Activated CD8-positive, alpha-beta memory T cell treated with anti-CD3 and anti-CD28 coated beads, Interleukin-2, amount 10 ng/mL, durations not matched to agents 7 days and 5 days (primary cell): ENCODE measurements at regions of chr16 and their contacts with region 1.

Region 1: GRCh38 chr16:88737298-88738150 is 31.2 kb downstream of the CTU2 start:
- DNase-seq: peak; percentile 86
- ATAC-seq: peak; percentile 91
- H3K4me3 Mint-ChIP-seq: no peak overlapping the region
- H3K27ac Mint-ChIP-seq: no peak overlapping the region
- H3K4me1 Mint-ChIP-seq: no peaks in the 10 kb centered on the region
- H3K27me3 Mint-ChIP-seq: no peaks in the 10 kb centered on the region

Region 2: DNA sequence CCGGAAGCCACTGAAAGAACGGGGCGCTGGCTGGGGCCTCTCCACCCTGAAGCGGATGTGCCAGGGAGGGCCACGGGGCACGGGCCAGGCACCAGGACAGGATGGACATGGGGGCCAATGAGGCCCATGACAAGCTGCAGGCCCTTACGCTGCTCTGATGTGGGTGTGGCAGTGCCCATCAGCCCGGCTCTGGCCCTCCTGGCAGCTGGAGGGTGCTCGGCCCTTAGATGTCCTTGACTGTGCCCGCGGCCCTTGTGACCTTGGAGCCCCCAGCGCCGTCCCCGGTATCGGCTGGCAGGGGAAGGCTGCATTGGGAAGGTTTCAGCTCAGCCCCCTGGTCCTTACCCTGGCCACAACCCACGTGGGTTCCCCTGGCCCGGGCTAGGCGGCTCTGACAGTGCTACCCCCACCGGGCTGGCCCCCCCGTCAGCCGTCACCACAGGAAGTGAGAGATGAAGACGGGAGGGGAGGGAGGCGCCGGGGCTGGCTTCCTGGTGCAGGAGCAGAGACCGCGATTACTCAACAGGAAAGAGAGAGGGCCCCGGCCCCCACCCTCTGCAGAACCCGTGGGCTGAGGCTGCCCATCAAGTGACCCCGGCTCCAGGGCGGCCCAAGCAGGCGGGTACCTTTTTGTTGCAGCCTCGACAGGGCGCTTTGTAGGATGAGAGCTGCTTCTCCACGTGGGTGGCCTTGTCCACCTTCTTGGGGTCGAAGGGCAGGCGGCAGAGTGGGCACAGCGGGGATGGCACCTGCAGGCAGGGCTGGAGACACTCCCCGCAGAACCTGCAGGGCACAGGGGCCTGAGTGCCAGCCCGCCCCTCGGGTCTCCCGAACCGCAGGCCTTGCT is 36.7 kb before region 1 on chr16:
- CTCF ChIA-PET with region 1: interaction called, 17 read pairs
- DNase-seq: peak; percentile 99
- ATAC-seq: peak; percentile 75
- H3K4me3 Mint-ChIP-seq: peak overlapping the region; percentile 89
- H3K27ac Mint-ChIP-seq: peak overlapping the region; percentile 98
- H3K4me1 Mint-ChIP-seq: peaks cover 61% of the 10 kb centered on the region
- H3K27me3 Mint-ChIP-seq: no peaks in the 10 kb centered on the region

Region 3: DNA sequence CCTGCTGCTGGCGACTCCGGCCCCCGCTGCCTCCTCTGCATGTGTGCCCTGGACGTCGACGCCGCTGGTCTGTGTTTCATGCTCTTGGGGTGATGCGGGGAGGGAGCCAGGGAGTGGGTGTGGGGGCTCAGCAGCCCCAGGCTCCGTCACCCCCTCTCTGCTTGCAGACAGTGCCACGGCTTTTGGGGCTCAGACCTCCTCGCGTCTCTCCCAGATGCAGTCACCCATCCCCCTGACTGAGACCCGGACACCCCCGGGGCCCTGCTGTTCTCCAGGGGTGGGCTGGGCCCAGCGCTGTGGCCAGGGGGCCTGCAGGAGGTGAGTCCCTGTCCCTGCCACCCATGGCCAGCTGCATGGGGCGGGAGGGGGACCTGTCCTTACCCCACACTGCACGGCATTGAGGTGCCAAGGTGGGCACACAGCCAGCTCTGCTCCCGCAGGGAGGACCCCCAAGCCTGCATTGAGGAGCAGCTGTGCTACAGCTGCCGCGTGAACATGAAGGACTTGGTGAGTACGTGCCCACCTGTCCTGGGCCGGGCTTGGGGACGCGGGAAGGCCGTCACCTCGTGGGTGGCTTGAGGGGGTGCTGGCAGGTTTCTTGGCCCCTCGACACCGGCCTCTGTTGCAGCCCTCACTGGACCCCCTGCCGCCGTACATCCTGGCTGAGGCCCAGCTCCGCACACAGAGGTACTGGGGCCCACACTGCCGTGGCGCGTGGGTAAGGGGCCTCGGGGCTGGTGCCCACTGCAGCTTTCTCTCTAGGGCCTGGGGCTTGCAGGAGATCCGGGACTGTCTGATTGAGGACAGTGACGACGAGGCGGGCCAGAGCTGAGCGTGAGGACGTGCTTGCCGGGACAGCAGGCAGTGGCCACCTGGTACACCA is 22.9 kb before region 1 on chr16:
- CTCF ChIA-PET with region 1: interaction called, 20 read pairs
- DNase-seq: no peak
- ATAC-seq: no peak
- H3K4me3 Mint-ChIP-seq: no peak overlapping the region
- H3K27ac Mint-ChIP-seq: no peak overlapping the region
- H3K4me1 Mint-ChIP-seq: peaks cover 2% of the 10 kb centered on the region
- H3K27me3 Mint-ChIP-seq: no peaks in the 10 kb centered on the region

Region 4: DNA sequence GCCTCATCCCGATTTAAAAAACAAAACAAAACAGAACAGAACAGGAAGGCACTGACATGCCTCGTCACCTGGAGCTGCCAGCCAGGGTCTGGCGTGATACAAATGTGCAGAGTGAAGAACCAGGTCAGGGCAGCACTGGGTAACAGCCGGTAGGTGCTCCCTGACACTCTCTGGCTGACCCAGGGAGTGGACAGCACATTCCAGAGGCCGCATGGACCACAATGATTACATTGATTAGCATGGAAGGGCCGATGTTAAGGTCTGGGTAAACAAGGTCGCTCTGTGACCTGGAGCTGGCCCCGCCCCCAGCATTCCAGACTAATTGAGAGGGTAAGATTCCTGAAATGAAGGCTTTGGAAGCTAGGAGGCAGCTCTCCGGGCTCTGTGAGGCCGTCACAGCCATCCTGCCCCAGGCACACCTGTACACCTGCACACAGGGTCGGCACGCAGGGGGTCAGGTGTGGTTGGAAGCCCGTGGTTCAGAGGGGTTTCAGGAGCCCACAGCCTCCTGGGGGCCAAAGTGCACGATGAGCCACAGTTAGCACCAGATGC is 26.1 kb after region 1 on chr16:
- CTCF ChIA-PET with region 1: interaction called, 40 read pairs
- DNase-seq: no peak
- ATAC-seq: no peak
- H3K4me3 Mint-ChIP-seq: no peak overlapping the region
- H3K27ac Mint-ChIP-seq: no peak overlapping the region
- H3K4me1 Mint-ChIP-seq: peaks cover 39% of the 10 kb centered on the region
- H3K27me3 Mint-ChIP-seq: no peaks in the 10 kb centered on the region

Region 5: DNA sequence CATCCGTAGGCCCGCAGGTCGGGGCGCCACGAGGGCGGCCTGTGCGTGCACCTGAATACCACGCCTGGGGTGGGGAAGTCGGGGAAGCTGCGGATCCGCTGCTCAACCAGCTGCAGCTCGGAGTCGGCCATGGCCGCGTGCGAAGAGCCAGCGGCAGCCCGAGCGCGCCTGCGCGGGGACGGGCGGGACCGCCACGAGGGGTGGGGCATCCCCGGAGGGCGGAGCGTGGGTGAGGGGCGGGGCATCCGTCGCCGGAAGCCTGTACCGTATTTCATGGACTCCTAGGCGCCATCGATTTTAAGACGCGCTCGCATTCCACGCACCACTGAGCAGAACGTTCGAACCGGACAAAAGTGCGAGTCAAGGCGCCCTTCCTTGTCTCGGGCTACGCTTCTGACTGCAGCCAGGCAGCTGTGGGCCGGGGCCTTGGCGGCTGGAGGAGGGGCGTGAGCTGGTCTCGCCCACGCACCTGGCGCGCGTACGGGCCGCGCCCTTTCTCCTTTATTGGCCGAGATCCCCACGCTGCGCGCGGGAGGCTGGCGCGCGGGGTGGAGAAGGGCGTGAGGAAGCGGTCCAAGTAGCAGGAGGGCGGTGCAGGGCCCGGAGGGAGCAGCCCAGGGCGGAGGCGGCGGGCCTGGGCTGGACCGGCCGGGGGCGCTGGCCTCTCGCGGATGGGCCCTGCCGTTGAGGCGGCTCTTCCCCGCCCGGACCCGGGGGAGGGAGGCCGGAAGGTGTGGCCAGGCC is 74.4 kb after region 1 on chr16 and contains the start of gene APRT:
- CTCF ChIA-PET with region 1: interaction called, 28 read pairs
- DNase-seq: peak; percentile 97
- ATAC-seq: peak; percentile 84
- H3K4me3 Mint-ChIP-seq: peak within 1 kb of the TSS; percentile 88
- H3K27ac Mint-ChIP-seq: peak within 1 kb of the TSS; percentile 98
- H3K4me1 Mint-ChIP-seq: peaks cover 30% of the 10 kb centered on the region
- H3K27me3 Mint-ChIP-seq: no peaks in the 10 kb centered on the region
- total RNA-seq, gene APRT: 127 to 148 TPM

Region 6: DNA sequence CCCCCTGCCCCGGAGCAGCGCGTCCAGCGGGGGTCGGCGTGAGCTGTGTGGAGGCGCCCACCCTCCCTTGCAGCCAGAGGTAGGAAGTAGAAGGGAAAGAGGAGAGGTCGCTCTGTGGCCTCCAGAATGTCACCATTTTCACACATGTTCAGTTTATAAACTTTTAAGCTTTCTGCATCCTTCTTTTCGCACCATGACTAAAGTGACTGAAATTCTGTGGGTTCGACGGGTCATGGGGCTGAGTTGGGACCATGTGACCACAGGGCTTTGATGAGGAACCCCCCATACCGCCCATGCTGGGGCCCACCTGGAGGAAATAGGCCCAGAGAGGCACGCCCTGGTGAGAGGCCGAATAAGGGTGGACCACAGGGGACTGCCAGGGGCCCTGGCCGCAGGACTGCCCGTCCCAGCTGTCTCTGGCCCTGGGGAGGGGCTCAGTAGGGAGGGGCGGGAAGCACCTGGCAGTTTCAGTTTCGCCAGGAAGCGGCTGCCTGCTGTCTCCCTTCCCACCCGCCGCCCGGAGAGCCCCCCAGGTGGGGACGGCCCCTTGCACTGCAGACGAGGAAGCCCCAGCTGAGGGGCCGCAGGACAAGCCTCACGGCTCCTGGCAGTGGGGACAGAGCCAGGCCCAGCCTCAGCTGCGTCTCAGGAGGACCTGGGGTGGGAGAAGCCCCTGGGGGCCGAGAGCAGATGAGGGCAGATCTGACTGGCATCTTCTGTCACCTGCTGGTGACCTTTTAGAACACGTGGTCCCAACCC is 230.5 kb after region 1 on chr16:
- CTCF ChIA-PET with region 1: no interaction called
- DNase-seq: no peak
- ATAC-seq: peak; percentile 22
- H3K4me3 Mint-ChIP-seq: no peak overlapping the region
- H3K27ac Mint-ChIP-seq: no peak overlapping the region
- H3K4me1 Mint-ChIP-seq: peaks cover 6% of the 10 kb centered on the region
- H3K27me3 Mint-ChIP-seq: peaks cover 27% of the 10 kb centered on the region

Region 7: GRCh38 chr16:89167425-89167941 is 430.0 kb after region 1 on chr16:
- CTCF ChIA-PET with region 1: interaction called, 13 read pairs
- DNase-seq: peak; percentile 86
- ATAC-seq: peak; percentile 26
- H3K4me3 Mint-ChIP-seq: no peak overlapping the region
- H3K27ac Mint-ChIP-seq: no peak overlapping the region
- H3K4me1 Mint-ChIP-seq: peaks cover 7% of the 10 kb centered on the region
- H3K27me3 Mint-ChIP-seq: peaks cover 9% of the 10 kb centered on the region